CD8-positive, alpha-beta memory T cell (primary cell): ENCODE measurements at regions of chr5 and their contacts with region 1.

Region 1: GRCh38 chr5:151447174-151448037 is at the start of gene SLC36A1:
- DNase-seq: peak; percentile 83 to 92 (median 84)
- H3K4me3 ChIP-seq: peak within 1 kb of the TSS; percentile 81
- H3K4me3 Mint-ChIP-seq: peak within 1 kb of the TSS; percentile 93 to 97 (median 96)
- H3K27ac ChIP-seq: peak within 1 kb of the TSS; percentile 51
- H3K27ac Mint-ChIP-seq: peak within 1 kb of the TSS; percentile 70 to 95 (median 90)
- H3K4me1 ChIP-seq: peaks cover 8% of the 10 kb centered on the region
- H3K4me1 Mint-ChIP-seq: peaks cover 18 to 21% (median 20%) of the 10 kb centered on the region in 3 donors
- H3K27me3 ChIP-seq: peaks cover 5% of the 10 kb centered on the region
- H3K27me3 Mint-ChIP-seq: peaks cover 6 to 36% of the 10 kb centered on the region in 2 donors
- total RNA-seq, gene SLC36A1: 6.8 to 7.2 TPM

Region 2: DNA sequence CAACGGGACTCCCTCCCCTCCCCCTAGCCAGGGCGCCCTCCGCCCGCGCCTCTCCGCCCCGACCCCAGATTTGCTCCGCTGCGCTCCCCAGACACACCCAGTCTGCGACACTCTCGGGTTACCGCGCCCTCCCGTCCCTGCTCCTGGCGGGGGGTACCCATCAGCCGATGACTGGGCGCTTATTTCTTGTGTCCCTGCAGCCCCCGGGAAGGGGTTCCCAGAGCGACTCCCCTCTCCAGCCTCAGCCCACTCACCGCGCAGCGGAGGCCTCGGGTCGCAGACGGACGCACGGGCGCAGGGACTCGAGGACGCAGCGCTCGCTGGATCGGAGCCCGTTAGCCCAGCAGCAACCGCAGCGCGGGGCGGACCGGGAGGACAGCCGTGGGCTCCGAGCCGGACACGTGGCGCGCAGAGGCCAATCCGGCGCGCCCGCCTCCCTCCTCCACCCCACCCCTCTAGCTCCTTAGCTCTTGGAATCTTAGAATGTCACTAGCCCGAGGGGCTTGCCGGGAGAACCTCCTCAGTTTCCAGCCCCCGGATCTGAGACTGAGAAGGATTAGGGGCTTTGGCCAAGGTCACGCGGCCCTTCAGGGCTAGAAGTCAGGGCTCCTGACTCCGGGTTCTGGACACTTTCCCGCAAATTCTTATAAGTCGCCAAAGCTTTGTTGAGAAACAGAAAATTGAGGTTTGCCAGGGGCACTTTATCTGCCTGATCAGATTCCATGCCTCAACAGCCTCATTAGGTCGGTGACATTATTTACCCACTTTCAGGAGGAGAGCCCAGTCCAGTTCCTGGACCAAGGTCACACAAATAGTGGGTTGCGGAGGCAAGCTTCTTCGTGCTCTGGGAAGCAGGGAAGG is 289.8 kb before region 1 on chr5 and contains the start of gene ANXA6:
- CTCF ChIA-PET with region 1: no interaction called
- POLR2A ChIA-PET with region 1: no interaction called
- DNase-seq: peak; percentile 59 to 80 (median 67)
- H3K4me3 ChIP-seq: peak within 1 kb of the TSS; percentile 86
- H3K4me3 Mint-ChIP-seq: peak within 1 kb of the TSS; percentile 96 to 99 (median 97)
- H3K27ac ChIP-seq: peak within 1 kb of the TSS; percentile 70
- H3K27ac Mint-ChIP-seq: peak within 1 kb of the TSS; percentile 86 to 99 (median 94)
- H3K4me1 ChIP-seq: peaks cover 48% of the 10 kb centered on the region
- H3K4me1 Mint-ChIP-seq: peaks cover 52 to 59% (median 58%) of the 10 kb centered on the region in 3 donors
- H3K27me3 ChIP-seq: no peaks in the 10 kb centered on the region
- H3K27me3 Mint-ChIP-seq: peaks cover 0 to 2% of the 10 kb centered on the region in 2 donors
- total RNA-seq, gene ANXA6: 452 to 459 TPM

Region 3: DNA sequence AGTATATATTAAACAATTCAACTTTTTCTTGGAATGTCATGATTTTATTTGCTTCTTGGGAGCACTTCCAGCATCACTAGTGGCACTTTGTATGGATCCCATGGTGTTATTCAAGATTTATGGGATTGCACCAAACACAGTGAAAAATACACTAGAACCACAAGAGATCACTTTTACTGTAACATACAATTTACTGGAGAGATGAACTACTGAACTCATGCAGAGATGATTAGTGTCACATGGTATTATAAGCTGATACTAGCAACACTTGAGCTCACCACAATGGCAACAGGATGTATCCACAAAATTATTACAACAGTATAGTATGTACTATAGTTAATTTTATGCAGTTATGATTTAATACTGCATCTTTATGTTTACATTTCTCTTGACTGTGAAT is 83.7 kb before region 1 on chr5:
- CTCF ChIA-PET with region 1: no interaction called
- POLR2A ChIA-PET with region 1: no interaction called
- DNase-seq: no peak
- H3K4me3 ChIP-seq: no peak overlapping the region
- H3K4me3 Mint-ChIP-seq: no peak overlapping the region
- H3K27ac ChIP-seq: no peak overlapping the region
- H3K27ac Mint-ChIP-seq: no peak overlapping the region
- H3K4me1 ChIP-seq: no peaks in the 10 kb centered on the region
- H3K4me1 Mint-ChIP-seq: no peaks in the 10 kb centered on the region
- H3K27me3 ChIP-seq: no peaks in the 10 kb centered on the region
- H3K27me3 Mint-ChIP-seq: peaks cover 13 to 27% of the 10 kb centered on the region in 2 donors

Region 4: GRCh38 chr5:151461312-151461711 is 13.9 kb after region 1 on chr5:
- CTCF ChIA-PET with region 1: interaction called, 34 read pairs
- POLR2A ChIA-PET with region 1: interaction called, 3 read pairs
- DNase-seq: no peak
- H3K4me3 ChIP-seq: no peak overlapping the region
- H3K4me3 Mint-ChIP-seq: no peak overlapping the region
- H3K27ac ChIP-seq: no peak overlapping the region
- H3K27ac Mint-ChIP-seq: no peak overlapping the region
- H3K4me1 ChIP-seq: no peaks in the 10 kb centered on the region
- H3K4me1 Mint-ChIP-seq: no peaks in the 10 kb centered on the region
- H3K27me3 ChIP-seq: no peaks in the 10 kb centered on the region
- H3K27me3 Mint-ChIP-seq: no peaks in the 10 kb centered on the region

Region 5: GRCh38 chr5:151490627-151491026 is 43.2 kb after region 1 on chr5:
- CTCF ChIA-PET with region 1: interaction called, 11 read pairs
- POLR2A ChIA-PET with region 1: no interaction called
- DNase-seq: no peak
- H3K4me3 ChIP-seq: no peak overlapping the region
- H3K4me3 Mint-ChIP-seq: no peak overlapping the region
- H3K27ac ChIP-seq: no peak overlapping the region
- H3K27ac Mint-ChIP-seq: no peak overlapping the region
- H3K4me1 ChIP-seq: no peaks in the 10 kb centered on the region
- H3K4me1 Mint-ChIP-seq: no peaks in the 10 kb centered on the region
- H3K27me3 ChIP-seq: no peaks in the 10 kb centered on the region
- H3K27me3 Mint-ChIP-seq: no peaks in the 10 kb centered on the region

Region 6: DNA sequence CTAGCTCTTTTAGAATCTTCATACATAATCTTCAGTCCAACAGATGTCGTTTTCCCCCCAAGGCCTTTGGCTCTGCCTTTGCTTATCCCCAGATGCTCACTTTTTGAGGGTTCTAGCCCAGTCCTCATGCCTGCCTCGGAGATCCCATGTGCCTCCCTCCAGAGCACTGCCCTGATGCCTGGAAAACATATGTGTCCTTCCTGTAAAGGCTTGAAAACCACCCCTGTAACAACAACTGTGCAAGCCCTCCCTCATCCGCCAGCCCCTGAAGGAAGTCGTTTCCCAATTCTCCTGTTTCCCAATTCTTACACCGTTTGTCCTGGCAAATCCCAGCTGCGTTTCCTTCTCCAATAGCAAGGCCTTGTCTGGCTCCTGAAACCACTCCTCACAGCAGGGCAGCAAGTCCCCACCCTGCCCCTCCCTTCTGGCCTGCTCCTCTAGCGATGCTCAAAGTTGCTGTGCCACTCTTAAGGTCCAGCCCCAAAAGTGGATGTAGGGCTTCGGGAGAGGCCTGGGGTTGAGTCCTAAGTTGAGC is 52.2 kb after region 1 on chr5:
- CTCF ChIA-PET with region 1: interaction called, 17 read pairs
- POLR2A ChIA-PET with region 1: no interaction called
- DNase-seq: no peak
- H3K4me3 ChIP-seq: no peak overlapping the region
- H3K4me3 Mint-ChIP-seq: no peak overlapping the region
- H3K27ac ChIP-seq: no peak overlapping the region
- H3K27ac Mint-ChIP-seq: peak overlapping the region in 1 of 8 donors; percentile 36
- H3K4me1 ChIP-seq: no peaks in the 10 kb centered on the region
- H3K4me1 Mint-ChIP-seq: peaks cover 5 to 6% (median 5%) of the 10 kb centered on the region in 3 donors
- H3K27me3 ChIP-seq: no peaks in the 10 kb centered on the region
- H3K27me3 Mint-ChIP-seq: no peaks in the 10 kb centered on the region

Region 7: GRCh38 chr5:151523335-151523734 is 75.9 kb after region 1 on chr5:
- CTCF ChIA-PET with region 1: interaction called, 10 read pairs
- POLR2A ChIA-PET with region 1: no interaction called
- DNase-seq: peak in 2 of 5 donors; percentile 11 to 17
- H3K4me3 ChIP-seq: no peak overlapping the region
- H3K4me3 Mint-ChIP-seq: no peak overlapping the region
- H3K27ac ChIP-seq: no peak overlapping the region
- H3K27ac Mint-ChIP-seq: no peak overlapping the region
- H3K4me1 ChIP-seq: no peaks in the 10 kb centered on the region
- H3K4me1 Mint-ChIP-seq: no peaks in the 10 kb centered on the region
- H3K27me3 ChIP-seq: no peaks in the 10 kb centered on the region
- H3K27me3 Mint-ChIP-seq: peaks cover 0 to 3% of the 10 kb centered on the region in 2 donors

Region 8: DNA sequence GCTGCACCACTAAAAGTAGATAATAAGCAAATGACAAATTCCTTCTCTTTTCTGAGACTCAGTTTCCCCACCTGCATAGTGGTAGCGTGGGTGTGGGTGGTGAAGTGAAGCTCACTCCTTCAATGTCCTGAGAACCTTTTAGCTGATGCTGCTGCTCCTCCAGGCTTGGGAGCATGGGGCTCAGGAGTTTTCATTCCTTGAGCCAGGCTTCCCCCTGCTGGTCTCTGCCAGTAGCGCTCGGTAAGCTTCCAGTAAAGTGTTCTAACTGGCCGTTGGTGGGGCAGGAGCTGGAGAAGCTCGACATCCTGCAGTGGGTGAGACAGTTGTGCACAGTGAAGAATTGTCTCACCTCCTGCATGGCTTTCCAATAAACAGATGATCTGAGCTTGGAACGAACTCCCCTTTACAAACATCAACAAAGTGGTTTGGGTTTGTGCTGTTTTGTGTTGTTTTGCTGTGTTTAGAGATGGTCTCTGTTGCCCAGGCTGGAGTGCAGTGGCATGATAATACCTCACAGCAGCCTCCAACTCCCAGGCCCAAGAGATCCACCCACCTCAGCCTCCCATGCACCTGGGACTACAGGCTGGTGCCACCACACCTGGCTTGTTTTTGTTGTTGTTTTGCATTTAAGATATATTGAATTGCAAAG is 204.7 kb after region 1 on chr5:
- CTCF ChIA-PET with region 1: interaction called, 51 read pairs
- POLR2A ChIA-PET with region 1: interaction called, 5 read pairs
- DNase-seq: peak; percentile 32 to 68 (median 40)
- H3K4me3 ChIP-seq: no peak overlapping the region
- H3K4me3 Mint-ChIP-seq: peak overlapping the region in 1 of 7 donors; percentile 9
- H3K27ac ChIP-seq: no peak overlapping the region
- H3K27ac Mint-ChIP-seq: no peak overlapping the region
- H3K4me1 ChIP-seq: no peaks in the 10 kb centered on the region
- H3K4me1 Mint-ChIP-seq: peaks cover 0 to 1% (median 0%) of the 10 kb centered on the region in 3 donors
- H3K27me3 ChIP-seq: no peaks in the 10 kb centered on the region
- H3K27me3 Mint-ChIP-seq: peaks cover 6 to 35% of the 10 kb centered on the region in 2 donors

Region 9: DNA sequence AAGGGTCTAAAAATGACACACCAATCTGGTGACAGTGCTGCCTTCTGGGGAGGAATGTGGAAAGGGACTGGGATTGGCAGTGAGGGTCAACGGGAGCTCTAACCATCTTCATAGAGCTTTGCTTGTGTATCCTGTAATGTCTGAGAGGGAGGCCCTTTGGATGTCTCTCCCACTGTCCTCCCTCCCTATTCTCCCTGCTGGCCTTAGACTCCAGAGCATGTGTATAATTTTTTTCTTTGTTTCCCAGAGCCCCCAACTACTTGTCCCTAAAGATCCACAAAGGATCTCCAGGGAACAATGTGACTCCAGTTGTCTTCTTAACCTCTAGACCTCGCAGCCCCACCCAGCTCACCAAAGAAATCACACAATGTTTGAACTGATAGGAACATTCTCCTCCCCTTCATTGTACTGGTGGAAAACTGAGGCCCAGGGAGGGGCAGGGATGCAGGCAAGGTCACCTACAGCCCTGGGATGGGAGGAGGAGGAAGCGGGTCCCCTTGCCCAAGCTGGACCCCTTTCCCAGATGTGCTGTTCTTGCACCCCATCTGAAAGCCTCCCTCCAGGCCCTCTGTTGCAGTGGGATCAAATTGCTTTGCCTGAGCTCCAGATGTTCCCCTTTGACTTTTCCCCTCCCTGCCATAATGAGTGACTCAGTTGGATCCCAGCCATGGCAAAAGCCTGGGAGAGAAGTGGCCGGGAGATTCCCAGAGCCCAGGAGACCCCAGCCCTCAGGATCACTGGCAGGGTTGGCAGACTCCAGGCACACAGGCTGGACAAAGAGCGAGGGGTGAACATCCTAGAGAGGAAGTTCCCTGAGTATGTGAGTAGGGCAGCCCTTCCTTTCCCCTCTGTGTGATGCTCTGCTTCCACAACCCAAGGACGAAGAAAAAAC is 217.5 kb after region 1 on chr5:
- CTCF ChIA-PET with region 1: no interaction called
- POLR2A ChIA-PET with region 1: no interaction called
- DNase-seq: no peak
- H3K4me3 ChIP-seq: no peak overlapping the region
- H3K4me3 Mint-ChIP-seq: no peak overlapping the region
- H3K27ac ChIP-seq: no peak overlapping the region
- H3K27ac Mint-ChIP-seq: peak overlapping the region in 1 of 8 donors; percentile 14
- H3K4me1 ChIP-seq: peaks cover 5% of the 10 kb centered on the region
- H3K4me1 Mint-ChIP-seq: peaks cover 0 to 8% (median 8%) of the 10 kb centered on the region in 3 donors
- H3K27me3 ChIP-seq: no peaks in the 10 kb centered on the region
- H3K27me3 Mint-ChIP-seq: peaks cover 0 to 3% of the 10 kb centered on the region in 2 donors